SK-N-SH (cell line): ENCODE measurements at regions of chr9 and their contacts with region 1.

Region 1: GRCh38 chr9:137534256-137535117 is 15.7 kb downstream of the PNPLA7 start:
- DNase-seq: peak; percentile 75
- H3K4me3 ChIP-seq: no peak overlapping the region
- H3K27ac ChIP-seq: no peak overlapping the region
- H3K4me1 ChIP-seq: peaks cover 0 to 7% of the 10 kb centered on the region in 2 experiments; a peak in 1 of 4 replicates
- H3K27me3 ChIP-seq: no peaks in the 10 kb centered on the region
- CTCF ChIP-seq: peak; percentile 69
- EP300 ChIP-seq: no peak
- RAD21 ChIP-seq: peak; percentile 60

Region 2: GRCh38 chr9:137521405-137521985 is 13.0 kb before region 1 on chr9:
- CTCF ChIA-PET with region 1: interaction called, 11 read pairs
- POLR2A ChIA-PET with region 1: no interaction called
- DNase-seq: no peak
- H3K4me3 ChIP-seq: no peak overlapping the region
- H3K27ac ChIP-seq: no peak overlapping the region
- H3K4me1 ChIP-seq: no peaks in the 10 kb centered on the region; a peak in 1 of 4 replicates
- H3K27me3 ChIP-seq: no peaks in the 10 kb centered on the region
- CTCF ChIP-seq: no peak
- EP300 ChIP-seq: no peak
- RAD21 ChIP-seq: no peak

Region 3: DNA sequence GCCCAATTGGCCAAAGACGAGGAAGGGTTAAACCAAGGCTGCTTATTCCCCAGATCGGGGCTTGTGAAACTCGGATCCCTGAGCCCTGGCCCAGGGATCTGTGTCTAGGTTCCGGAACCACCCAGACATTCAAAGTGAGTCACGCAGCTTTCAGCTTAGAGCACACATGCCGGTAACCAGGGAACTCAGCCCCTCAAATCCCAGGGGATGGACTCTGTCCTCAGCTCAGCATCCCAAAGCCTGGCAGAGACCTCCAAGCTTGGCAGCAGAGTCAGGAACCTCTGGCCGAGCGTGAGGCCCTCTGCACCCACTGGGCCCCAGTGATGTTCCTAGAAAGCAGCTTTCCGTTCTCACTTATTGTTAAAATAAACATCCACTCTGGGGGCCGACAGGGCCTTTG is 10.6 kb after region 1 on chr9:
- CTCF ChIA-PET with region 1: interaction called, 13 read pairs
- POLR2A ChIA-PET with region 1: no interaction called
- DNase-seq: no peak
- H3K4me3 ChIP-seq: no peak overlapping the region
- H3K27ac ChIP-seq: no peak overlapping the region
- H3K4me1 ChIP-seq: peaks cover 0 to 4% of the 10 kb centered on the region in 2 experiments; a peak in 1 of 4 replicates
- H3K27me3 ChIP-seq: no peaks in the 10 kb centered on the region
- CTCF ChIP-seq: no peak
- EP300 ChIP-seq: no peak
- RAD21 ChIP-seq: no peak

Region 4: DNA sequence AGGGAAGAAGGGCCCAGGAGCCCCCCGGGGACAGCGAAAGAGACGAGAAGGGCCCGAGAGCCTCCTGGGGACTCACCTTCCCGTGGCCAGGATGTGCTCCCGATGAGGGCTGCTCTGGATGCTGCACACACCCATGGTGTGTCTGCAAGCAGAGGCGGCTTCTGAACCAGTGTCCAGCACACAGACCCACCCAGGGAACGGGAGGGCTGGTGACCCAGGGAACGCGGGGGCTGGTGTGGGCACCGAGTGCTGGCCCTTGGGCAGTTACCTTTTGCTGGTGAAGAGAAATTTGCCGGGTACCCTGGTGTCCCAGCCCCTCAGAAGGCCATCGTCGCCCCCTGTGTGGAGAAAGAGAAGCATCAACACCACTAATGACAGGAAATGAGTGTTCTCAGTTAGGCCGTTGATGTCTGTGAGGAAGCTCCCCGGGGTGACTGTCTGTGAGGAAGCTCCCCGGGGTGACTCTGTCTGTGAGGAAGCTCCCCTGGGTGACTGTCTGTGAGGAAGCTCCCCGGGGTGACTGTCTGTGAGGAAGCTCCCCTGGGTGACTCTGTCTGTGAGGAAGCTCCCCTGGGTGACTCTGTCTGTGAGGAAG is 30.4 kb after region 1 on chr9:
- CTCF ChIA-PET with region 1: no interaction called
- POLR2A ChIA-PET with region 1: no interaction called
- DNase-seq: no peak
- H3K4me3 ChIP-seq: no peak overlapping the region
- H3K27ac ChIP-seq: no peak overlapping the region
- H3K4me1 ChIP-seq: no peaks in the 10 kb centered on the region
- H3K27me3 ChIP-seq: no peaks in the 10 kb centered on the region
- CTCF ChIP-seq: no peak
- EP300 ChIP-seq: no peak
- RAD21 ChIP-seq: no peak

Region 5: DNA sequence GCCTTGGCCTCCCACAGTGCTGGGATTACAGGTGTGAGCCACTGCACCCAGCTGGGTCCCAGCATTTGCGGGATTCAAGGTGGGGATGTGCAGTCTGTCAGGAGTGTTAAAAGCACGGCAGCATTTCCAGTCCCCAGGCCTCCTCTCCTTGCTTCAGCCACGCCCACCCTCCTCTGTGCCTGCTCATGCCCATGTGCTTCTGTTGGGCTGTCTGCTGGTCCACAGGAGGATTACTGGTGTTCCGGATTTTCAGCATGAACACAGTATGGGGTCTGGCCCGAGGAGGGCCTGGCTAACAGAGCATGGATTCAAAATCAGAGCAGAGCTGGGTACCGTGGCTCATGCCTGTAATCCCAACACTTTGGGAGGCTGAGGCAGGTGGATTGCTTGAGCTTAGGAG is 76.5 kb after region 1 on chr9:
- CTCF ChIA-PET with region 1: no interaction called
- POLR2A ChIA-PET with region 1: no interaction called
- DNase-seq: no peak
- H3K4me3 ChIP-seq: no peak overlapping the region
- H3K27ac ChIP-seq: no peak overlapping the region
- H3K4me1 ChIP-seq: peaks cover 15 to 23% of the 10 kb centered on the region in 2 experiments; a peak in 3 of 4 replicates
- H3K27me3 ChIP-seq: no peaks in the 10 kb centered on the region
- CTCF ChIP-seq: no peak
- EP300 ChIP-seq: no peak
- RAD21 ChIP-seq: no peak

Region 6: GRCh38 chr9:137956688-137957385 is 422.4 kb after region 1 on chr9:
- CTCF ChIA-PET with region 1: no interaction called
- POLR2A ChIA-PET with region 1: no interaction called
- DNase-seq: no peak
- H3K4me3 ChIP-seq: no peak overlapping the region
- H3K27ac ChIP-seq: no peak overlapping the region
- H3K4me1 ChIP-seq: no peaks in the 10 kb centered on the region; a peak in 1 of 4 replicates
- H3K27me3 ChIP-seq: no peaks in the 10 kb centered on the region
- CTCF ChIP-seq: no peak
- EP300 ChIP-seq: no peak
- RAD21 ChIP-seq: no peak